ENCODE measurements at regions of chr3 and their contacts with region 1.

Region 1: DNA sequence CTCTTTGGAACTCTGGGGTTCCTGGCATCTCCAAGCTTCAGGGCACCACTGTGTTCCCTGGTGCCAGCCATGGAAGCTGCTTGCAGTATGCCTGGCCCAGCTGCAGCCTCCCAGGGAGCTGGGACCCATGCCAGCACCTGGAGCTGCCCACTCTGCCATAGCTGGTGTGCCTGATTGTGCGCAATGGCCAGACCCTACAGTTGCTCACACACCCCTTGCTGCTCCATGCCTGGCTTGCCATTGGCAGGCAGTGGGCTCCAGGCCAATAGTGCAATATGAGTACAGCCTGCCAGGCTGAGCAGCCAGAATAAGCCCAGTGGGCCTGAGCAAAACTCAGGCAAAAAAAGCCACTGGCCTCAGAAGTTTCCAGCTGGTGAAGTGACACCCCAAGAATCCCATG is 43.8 kb upstream of the LRRFIP2 start:
- DNase-seq: peak in 4 of 5 donors; percentile 47 to 71 (median 54)
- ATAC-seq: peak; percentile 72 to 84 (median 75)
- H3K4me3 ChIP-seq: no peak overlapping the region
- H3K27ac ChIP-seq: peak overlapping the region in 1 of 12 donors; percentile 55
- H3K4me1 ChIP-seq: peaks cover 0 to 7% (median 0%) of the 10 kb centered on the region in 12 donors
- H3K27me3 ChIP-seq: no peaks in the 10 kb centered on the region
- CTCF ChIP-seq: no peak
- POLR2A ChIP-seq: no peak

Region 2: DNA sequence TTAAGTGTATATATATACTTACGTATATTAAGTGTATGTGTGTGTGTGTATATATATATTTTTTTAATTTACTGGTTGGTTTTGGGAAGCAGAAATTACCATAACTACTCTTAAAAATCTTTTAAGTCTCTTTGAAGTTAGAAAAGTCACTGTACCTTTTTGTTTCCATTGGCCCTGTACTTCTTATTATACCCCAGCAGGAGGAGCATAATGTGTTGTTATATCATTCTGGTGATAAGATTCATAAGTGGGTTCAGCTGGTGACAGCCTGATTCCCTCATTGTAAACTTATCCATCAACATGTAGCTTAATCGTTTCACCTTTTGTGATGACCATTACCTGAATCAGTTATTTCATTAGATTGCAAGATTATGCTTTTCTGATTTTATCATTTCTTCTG is 194.1 kb before region 1 on chr3:
- intact Hi-C with region 1: loop called (anchors 1 to 5 kb)
- DNase-seq: no peak
- ATAC-seq: no peak
- H3K4me3 ChIP-seq: no peak overlapping the region
- H3K27ac ChIP-seq: peak overlapping the region in 2 of 12 donors; percentile 56 to 81
- H3K4me1 ChIP-seq: peaks cover 0 to 40% (median 26%) of the 10 kb centered on the region in 12 donors
- H3K27me3 ChIP-seq: no peaks in the 10 kb centered on the region
- CTCF ChIP-seq: peak; percentile 24 to 61 (median 46)
- POLR2A ChIP-seq: no peak

Region 3: DNA sequence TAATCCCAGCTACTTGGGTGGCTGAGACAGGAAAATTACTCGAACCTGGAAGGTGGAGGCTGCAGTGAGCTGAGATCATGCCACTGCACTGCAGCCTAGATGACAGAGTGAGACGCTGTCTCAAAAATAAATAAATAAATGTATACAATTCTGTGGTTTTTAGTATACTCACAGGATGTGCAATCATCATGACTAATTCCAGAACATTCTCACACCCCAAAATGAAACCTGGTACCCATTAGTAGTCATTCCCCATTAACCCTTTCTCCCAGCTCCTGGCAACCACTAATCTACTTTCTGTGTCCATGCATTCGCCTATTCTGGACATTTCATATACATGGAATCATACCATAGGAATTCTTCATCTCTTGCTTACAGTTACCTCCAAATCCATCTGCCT is 88.3 kb before region 1 on chr3:
- intact Hi-C with region 1: no loop called
- DNase-seq: no peak
- ATAC-seq: no peak
- H3K4me3 ChIP-seq: no peak overlapping the region
- H3K27ac ChIP-seq: no peak overlapping the region
- H3K4me1 ChIP-seq: peaks cover 5 to 59% (median 28%) of the 10 kb centered on the region in 12 donors
- H3K27me3 ChIP-seq: no peaks in the 10 kb centered on the region
- CTCF ChIP-seq: no peak
- POLR2A ChIP-seq: no peak

Region 4: DNA sequence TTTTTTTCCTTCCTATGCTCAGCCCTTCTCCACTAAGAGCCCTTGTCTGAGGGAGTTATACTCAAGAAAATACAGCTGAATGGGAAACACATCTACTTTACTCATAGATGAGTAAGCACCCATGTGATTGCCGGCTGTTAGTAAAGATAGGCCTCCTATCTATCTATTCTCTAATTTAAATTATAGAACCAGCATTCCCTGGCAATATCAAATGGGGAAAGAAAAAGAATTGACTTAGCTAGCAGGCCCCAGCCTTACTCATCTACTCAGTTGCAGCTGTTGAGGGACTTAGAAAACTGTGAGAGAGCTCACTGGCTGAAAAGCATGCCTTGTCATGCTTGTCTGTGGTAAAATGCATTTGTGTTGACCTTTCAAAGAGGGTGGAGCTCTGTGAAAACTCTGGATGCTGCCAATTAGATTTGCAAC is 73.1 kb after region 1 on chr3:
- intact Hi-C with region 1: no loop called
- DNase-seq: no peak
- ATAC-seq: peak in 2 of 4 donors; percentile 10 to 39
- H3K4me3 ChIP-seq: no peak overlapping the region
- H3K27ac ChIP-seq: peak overlapping the region in 1 of 12 donors; percentile 34
- H3K4me1 ChIP-seq: peaks cover 0 to 16% (median 1%) of the 10 kb centered on the region in 12 donors
- H3K27me3 ChIP-seq: no peaks in the 10 kb centered on the region
- CTCF ChIP-seq: no peak
- POLR2A ChIP-seq: no peak